ENCODE measurements at regions of chr5 and their contacts with region 1.

Region 1: GRCh38 chr5:139422307-139422893 is 16.9 kb downstream of the DNAJC18 start:
- DNase-seq: peak; percentile 82
- ATAC-seq: peak; percentile 84
- H3K4me3 Mint-ChIP-seq: no peak overlapping the region
- H3K27ac Mint-ChIP-seq: no peak overlapping the region
- H3K4me1 Mint-ChIP-seq: peaks cover 19% of the 10 kb centered on the region
- H3K27me3 Mint-ChIP-seq: no peaks in the 10 kb centered on the region

Region 2: DNA sequence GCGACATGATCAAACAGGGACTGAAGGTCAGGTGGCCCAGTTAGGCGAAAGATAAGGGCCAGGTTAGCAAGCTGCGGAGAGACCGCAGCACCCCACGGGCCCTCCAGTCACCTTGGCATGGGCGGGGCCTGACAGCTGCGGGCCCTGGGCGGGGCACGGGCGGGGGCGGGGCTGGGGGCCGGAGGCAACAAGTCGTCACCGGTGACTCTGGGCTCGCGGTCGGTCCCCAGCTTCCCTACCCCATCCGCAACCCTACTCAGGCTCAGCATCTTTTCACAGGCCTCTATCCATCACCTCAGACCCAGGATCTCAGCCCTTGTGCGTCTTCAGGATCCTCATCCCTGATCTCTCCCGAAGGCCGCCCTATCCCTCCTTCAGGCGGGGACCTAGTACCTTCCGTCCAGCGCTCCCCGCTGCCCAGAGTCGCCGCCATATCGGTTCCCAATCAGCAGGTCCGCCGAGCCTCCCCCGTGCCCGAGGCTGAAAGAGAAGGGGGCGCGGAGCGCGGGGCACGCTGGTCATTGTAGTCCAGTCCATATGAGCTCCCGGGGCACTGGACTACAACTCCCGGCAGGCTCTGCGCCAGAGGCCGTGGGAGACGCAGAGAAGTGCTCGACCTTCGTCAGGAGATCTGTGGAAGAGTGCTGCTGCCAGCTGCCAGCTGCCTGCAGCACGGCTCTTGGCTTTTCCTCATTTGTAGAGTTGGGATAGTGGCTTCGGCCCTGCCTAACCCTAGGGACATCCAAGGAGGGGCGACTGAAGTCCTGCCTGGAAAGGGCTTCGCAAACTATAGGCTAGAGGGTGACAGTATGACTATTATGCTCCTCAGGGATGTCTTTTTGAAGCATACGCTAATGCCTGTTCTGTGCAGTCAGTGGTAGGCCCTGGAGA is 16.9 kb after region 1 on chr5 and contains the start of gene DNAJC18:
- CTCF ChIA-PET with region 1: interaction called, 29 read pairs
- POLR2A ChIA-PET with region 1: no interaction called
- DNase-seq: peak; percentile 91
- ATAC-seq: peak; percentile 93
- H3K4me3 Mint-ChIP-seq: peak within 1 kb of the TSS; percentile 97
- H3K27ac Mint-ChIP-seq: peak within 1 kb of the TSS; percentile 98
- H3K4me1 Mint-ChIP-seq: peaks cover 50% of the 10 kb centered on the region
- H3K27me3 Mint-ChIP-seq: peaks cover 14% of the 10 kb centered on the region
- total RNA-seq, gene DNAJC18: 3.7 to 5.4 TPM

Region 3: DNA sequence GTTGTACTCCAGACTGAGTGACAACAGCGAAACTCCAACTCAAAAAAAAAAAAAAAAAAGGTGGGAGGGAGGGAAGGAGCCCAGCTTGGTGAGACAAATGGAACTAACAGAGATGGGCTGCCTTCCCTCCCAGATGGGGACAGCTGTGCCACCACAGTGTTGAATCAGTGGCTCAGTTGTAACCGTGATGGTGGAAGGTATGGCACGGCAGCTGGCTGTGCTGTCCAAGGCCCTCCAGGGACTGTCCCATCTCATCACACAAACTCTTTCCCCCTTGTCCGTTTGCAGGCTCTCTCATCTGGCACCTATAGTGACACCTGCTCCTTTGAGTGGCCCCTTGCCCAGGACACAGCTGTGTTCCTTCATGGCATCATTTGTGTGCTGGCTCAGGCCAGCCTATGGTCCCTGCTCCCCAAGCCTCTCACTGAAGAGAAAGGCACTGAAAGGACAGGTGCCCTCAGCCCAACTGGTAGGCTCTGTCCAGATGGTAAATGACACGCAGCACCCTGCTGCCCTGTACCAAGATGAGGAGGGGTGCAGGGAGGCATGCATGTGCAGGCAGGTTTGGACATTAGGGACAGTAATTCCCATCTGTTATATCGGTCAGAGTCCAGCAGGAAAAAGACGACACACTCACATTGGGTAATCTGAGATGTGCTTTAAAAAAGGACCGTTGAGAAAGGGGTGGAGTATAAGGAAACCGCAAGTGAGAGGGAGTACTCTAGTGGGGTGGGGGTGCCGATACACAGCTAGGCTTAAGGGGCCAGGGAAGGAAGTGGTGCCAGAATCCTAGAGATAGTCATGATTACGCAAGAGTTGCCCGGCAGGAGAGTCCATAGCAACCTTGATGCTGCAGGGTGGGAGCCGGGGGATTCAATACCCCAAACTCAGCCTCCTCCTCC is 52.7 kb after region 1 on chr5:
- CTCF ChIA-PET with region 1: interaction called, 13 read pairs
- POLR2A ChIA-PET with region 1: no interaction called
- DNase-seq: no peak
- ATAC-seq: peak; percentile 18
- H3K4me3 Mint-ChIP-seq: peak overlapping the region; percentile 25
- H3K27ac Mint-ChIP-seq: peak overlapping the region; percentile 84
- H3K4me1 Mint-ChIP-seq: peaks cover 66% of the 10 kb centered on the region
- H3K27me3 Mint-ChIP-seq: no peaks in the 10 kb centered on the region

Region 4: DNA sequence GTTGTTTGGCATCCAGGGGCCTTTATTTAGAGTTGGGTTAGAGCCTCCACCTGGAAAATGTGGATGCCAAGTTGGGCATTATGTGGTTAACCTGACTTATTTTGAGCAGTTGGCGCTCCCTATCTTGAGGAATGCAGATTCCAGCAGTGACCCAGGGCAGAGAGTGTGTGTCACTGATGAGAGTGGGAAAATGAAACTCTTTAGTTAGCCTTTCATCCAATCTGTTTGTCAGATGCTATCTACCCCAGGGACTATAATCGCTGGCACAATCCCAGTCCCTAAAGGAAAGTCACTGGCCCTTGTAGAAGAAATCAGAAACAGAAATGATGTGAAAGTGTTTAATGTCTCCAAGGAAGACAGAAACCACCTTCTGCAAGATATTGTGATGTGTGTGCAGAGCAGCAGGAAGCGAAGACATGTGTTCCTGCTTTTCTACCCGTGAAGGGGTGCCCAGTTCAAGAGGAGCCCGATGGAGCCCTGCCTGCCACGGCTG is 70.3 kb after region 1 on chr5:
- CTCF ChIA-PET with region 1: interaction called, 11 read pairs
- POLR2A ChIA-PET with region 1: no interaction called
- DNase-seq: no peak
- ATAC-seq: no peak
- H3K4me3 Mint-ChIP-seq: no peak overlapping the region
- H3K27ac Mint-ChIP-seq: peak overlapping the region; percentile 20
- H3K4me1 Mint-ChIP-seq: peaks cover 28% of the 10 kb centered on the region
- H3K27me3 Mint-ChIP-seq: peaks cover 2% of the 10 kb centered on the region

Region 5: GRCh38 chr5:139517683-139518564 is 95.5 kb after region 1 on chr5:
- CTCF ChIA-PET with region 1: interaction called, 538 read pairs
- POLR2A ChIA-PET with region 1: interaction called, 16 read pairs
- DNase-seq: peak; percentile 91
- ATAC-seq: peak; percentile 97
- H3K4me3 Mint-ChIP-seq: peak overlapping the region; percentile 75
- H3K27ac Mint-ChIP-seq: peak overlapping the region; percentile 88
- H3K4me1 Mint-ChIP-seq: peaks cover 26% of the 10 kb centered on the region
- H3K27me3 Mint-ChIP-seq: peaks cover 2% of the 10 kb centered on the region